Activated CD8-positive, alpha-beta T cell treated with anti-CD3 and anti-CD28 coated beads, Interleukin-2, amount 10 ng/mL, durations not matched to agents 7 days and 5 days (primary cell): ENCODE measurements at regions of chr17 and their contacts with region 1.

Region 1: DNA sequence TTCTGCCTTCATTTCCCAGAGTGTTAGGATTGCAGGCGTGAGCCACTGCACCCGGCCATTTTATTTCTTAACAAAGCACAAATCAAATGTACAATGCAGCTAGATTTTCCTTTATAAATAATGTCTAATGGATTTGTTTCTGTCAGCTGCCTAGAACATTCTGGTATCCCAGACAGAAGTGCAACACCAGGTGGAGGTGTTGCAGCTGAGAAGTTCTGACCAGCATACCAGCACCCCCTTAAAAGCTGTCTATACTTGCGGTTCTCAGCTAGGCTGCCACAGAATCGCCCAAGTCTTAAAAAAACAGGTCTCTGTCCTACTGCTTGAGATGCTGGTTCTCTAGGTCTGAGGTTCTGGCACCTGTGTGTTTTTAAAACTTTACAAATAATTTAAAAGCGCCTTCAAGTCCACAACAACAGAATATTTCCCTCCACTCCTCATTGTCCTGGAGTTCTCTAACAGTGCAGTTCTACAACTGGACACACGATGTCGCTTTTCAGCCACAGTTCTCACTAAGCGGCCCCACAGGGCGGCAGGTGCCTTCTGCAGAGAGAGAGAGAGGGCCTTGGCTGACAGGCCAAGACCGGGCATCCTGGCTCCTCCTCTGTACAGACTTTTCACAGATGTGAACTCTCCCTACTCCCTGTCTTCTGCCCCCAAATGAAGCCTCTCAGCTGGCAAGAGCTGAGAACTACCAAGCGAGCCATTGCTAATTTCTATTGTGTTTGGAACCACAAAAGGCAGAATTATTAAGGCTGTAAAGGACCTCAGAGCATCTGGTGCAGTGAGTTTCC is 32.6 kb upstream of the MEOX1 start:
- DNase-seq: peak; percentile 85
- ATAC-seq: peak; percentile 93
- H3K4me3 Mint-ChIP-seq: no peak overlapping the region
- H3K27ac Mint-ChIP-seq: no peak overlapping the region
- H3K4me1 Mint-ChIP-seq: peaks cover 5% of the 10 kb centered on the region
- H3K27me3 Mint-ChIP-seq: peaks cover 12% of the 10 kb centered on the region

Region 2: DNA sequence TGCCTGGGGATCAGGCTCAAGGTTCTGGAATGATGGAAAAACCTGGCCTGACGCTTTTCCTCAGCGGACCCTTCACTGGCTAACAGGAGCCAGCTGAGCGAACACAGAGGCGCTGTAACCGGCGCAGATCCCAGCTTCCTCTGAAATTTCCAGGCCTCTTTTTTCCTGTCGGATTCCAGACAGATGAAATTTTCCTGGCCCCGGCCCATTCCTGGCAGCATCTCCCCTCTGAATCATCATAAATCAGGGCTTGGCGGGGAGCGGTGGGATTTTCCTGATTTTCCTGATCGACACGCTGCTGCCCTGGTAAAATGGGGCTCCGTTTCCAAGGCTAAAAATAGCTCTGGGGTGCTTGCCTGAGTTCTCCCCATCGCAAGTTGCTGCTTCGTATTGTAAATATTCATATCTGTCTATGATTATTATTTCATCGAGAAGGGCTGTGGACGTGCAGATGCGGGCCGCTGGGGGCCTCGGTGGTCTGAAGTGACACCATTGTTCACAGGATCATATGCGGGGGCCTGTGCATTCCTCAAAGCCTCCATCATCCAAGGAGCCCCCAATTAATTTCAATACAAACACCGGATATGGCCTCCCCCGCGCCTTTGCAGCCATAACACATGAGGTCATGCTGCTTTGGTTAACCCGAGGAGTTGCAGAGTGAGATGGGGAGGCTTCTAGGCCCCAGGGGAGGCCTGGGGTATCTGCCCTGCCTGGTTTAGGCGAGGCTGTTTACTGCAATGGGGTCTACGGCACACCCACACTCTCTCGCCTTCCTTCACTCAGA is 102.3 kb before region 1 on chr17:
- CTCF ChIA-PET with region 1: no interaction called
- POLR2A ChIA-PET with region 1: no interaction called
- DNase-seq: no peak
- ATAC-seq: no peak
- H3K4me3 Mint-ChIP-seq: no peak overlapping the region
- H3K27ac Mint-ChIP-seq: no peak overlapping the region
- H3K4me1 Mint-ChIP-seq: peaks cover 2% of the 10 kb centered on the region
- H3K27me3 Mint-ChIP-seq: no peaks in the 10 kb centered on the region

Region 3: GRCh38 chr17:43615330-43616028 is 78.8 kb before region 1 on chr17:
- CTCF ChIA-PET with region 1: no interaction called
- POLR2A ChIA-PET with region 1: no interaction called
- DNase-seq: no peak
- ATAC-seq: no peak
- H3K4me3 Mint-ChIP-seq: no peak overlapping the region
- H3K27ac Mint-ChIP-seq: no peak overlapping the region
- H3K4me1 Mint-ChIP-seq: no peaks in the 10 kb centered on the region
- H3K27me3 Mint-ChIP-seq: peaks cover under 1% of the 10 kb centered on the region

Region 4: GRCh38 chr17:43728081-43728480 is 33.8 kb after region 1 on chr17:
- CTCF ChIA-PET with region 1: interaction called, 11 read pairs
- POLR2A ChIA-PET with region 1: no interaction called
- DNase-seq: no peak
- ATAC-seq: no peak
- H3K4me3 Mint-ChIP-seq: no peak overlapping the region
- H3K27ac Mint-ChIP-seq: no peak overlapping the region
- H3K4me1 Mint-ChIP-seq: no peaks in the 10 kb centered on the region
- H3K27me3 Mint-ChIP-seq: peaks cover 3% of the 10 kb centered on the region

Region 5: GRCh38 chr17:43753493-43754129 is 59.3 kb after region 1 on chr17:
- CTCF ChIA-PET with region 1: interaction called, 607 read pairs
- POLR2A ChIA-PET with region 1: no interaction called
- DNase-seq: peak; percentile 45
- ATAC-seq: no peak
- H3K4me3 Mint-ChIP-seq: no peak overlapping the region
- H3K27ac Mint-ChIP-seq: no peak overlapping the region
- H3K4me1 Mint-ChIP-seq: peaks cover 29% of the 10 kb centered on the region
- H3K27me3 Mint-ChIP-seq: peaks cover 40% of the 10 kb centered on the region

Region 6: GRCh38 chr17:43760254-43760852 is 66.1 kb after region 1 on chr17:
- CTCF ChIA-PET with region 1: interaction called, 607 read pairs
- POLR2A ChIA-PET with region 1: no interaction called
- DNase-seq: peak; percentile 94
- ATAC-seq: peak; percentile 95
- H3K4me3 Mint-ChIP-seq: no peak overlapping the region
- H3K27ac Mint-ChIP-seq: no peak overlapping the region
- H3K4me1 Mint-ChIP-seq: peaks cover 2% of the 10 kb centered on the region
- H3K27me3 Mint-ChIP-seq: peaks cover 24% of the 10 kb centered on the region